ENCODE measurements at regions of chr7 and their contacts with region 1.

Region 1: GRCh38 chr7:111735661-111736551 is 173.6 kb upstream of the IMMP2L start:
- DNase-seq: peak in 8 of 9 experiments; percentile 8 to 70 (median 56)
- ATAC-seq: peak; percentile 54
- H3K4me3 ChIP-seq: no peak overlapping the region
- H3K4me3 Mint-ChIP-seq: no peak overlapping the region
- H3K27ac ChIP-seq: no peak overlapping the region
- H3K27ac Mint-ChIP-seq: no peak overlapping the region
- H3K4me1 ChIP-seq: no peaks in the 10 kb centered on the region
- H3K4me1 Mint-ChIP-seq: no peaks in the 10 kb centered on the region
- H3K27me3 ChIP-seq: no peaks in the 10 kb centered on the region
- H3K27me3 Mint-ChIP-seq: peaks cover 5% of the 10 kb centered on the region
- CTCF ChIP-seq: peak; percentile 93

Region 2: DNA sequence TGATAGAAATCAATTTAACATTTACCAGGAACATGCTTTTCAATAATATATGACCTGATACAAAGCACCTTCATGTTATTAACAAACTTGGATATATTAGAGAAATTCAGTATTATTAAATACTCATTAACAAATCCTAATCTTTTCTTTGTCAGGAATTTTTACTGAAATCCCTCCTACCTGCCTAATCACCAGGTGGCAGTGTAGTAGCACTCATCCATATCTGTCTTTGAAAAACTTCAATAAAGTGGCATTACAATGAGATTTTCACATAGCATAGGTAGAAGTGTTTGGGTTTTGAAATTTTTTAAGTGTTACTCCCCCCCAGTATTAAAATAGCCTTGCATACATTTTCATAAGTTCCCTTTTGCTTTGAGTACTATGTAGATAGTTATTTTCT is 1891.5 kb before region 1 on chr7:
- CTCF ChIA-PET with region 1: interaction called, 4 read pairs
- POLR2A ChIA-PET with region 1: no interaction called
- intact Hi-C with region 1: loop called in 1 of 2 experiments (anchors 1 kb)
- DNase-seq: peak in 2 of 9 experiments; percentile 4 to 40
- ATAC-seq: no peak
- H3K4me3 ChIP-seq: no peak overlapping the region
- H3K4me3 Mint-ChIP-seq: no peak overlapping the region
- H3K27ac ChIP-seq: no peak overlapping the region
- H3K27ac Mint-ChIP-seq: no peak overlapping the region
- H3K4me1 ChIP-seq: no peaks in the 10 kb centered on the region
- H3K4me1 Mint-ChIP-seq: no peaks in the 10 kb centered on the region
- H3K27me3 ChIP-seq: no peaks in the 10 kb centered on the region
- H3K27me3 Mint-ChIP-seq: no peaks in the 10 kb centered on the region
- CTCF ChIP-seq: peak; percentile 22

Region 3: GRCh38 chr7:110090110-110090769 is 1645.7 kb before region 1 on chr7:
- CTCF ChIA-PET with region 1: no interaction called
- POLR2A ChIA-PET with region 1: no interaction called
- intact Hi-C with region 1: loop called (anchors 5 kb)
- DNase-seq: peak in 2 of 9 experiments; percentile 9 to 33
- ATAC-seq: no peak
- H3K4me3 ChIP-seq: no peak overlapping the region
- H3K4me3 Mint-ChIP-seq: no peak overlapping the region
- H3K27ac ChIP-seq: no peak overlapping the region
- H3K27ac Mint-ChIP-seq: no peak overlapping the region
- H3K4me1 ChIP-seq: no peaks in the 10 kb centered on the region
- H3K4me1 Mint-ChIP-seq: no peaks in the 10 kb centered on the region
- H3K27me3 ChIP-seq: no peaks in the 10 kb centered on the region
- H3K27me3 Mint-ChIP-seq: no peaks in the 10 kb centered on the region
- CTCF ChIP-seq: peak; percentile 11

Region 4: GRCh38 chr7:110595690-110596325 is 1140.1 kb before region 1 on chr7:
- CTCF ChIA-PET with region 1: interaction called, 3 read pairs
- POLR2A ChIA-PET with region 1: no interaction called
- intact Hi-C with region 1: loop called in 1 of 2 experiments (anchors 10 kb)
- DNase-seq: peak in 2 of 9 experiments; percentile 13 to 38
- ATAC-seq: no peak
- H3K4me3 ChIP-seq: no peak overlapping the region
- H3K4me3 Mint-ChIP-seq: no peak overlapping the region
- H3K27ac ChIP-seq: no peak overlapping the region
- H3K27ac Mint-ChIP-seq: no peak overlapping the region
- H3K4me1 ChIP-seq: no peaks in the 10 kb centered on the region
- H3K4me1 Mint-ChIP-seq: no peaks in the 10 kb centered on the region
- H3K27me3 ChIP-seq: no peaks in the 10 kb centered on the region
- H3K27me3 Mint-ChIP-seq: no peaks in the 10 kb centered on the region
- CTCF ChIP-seq: no peak

Region 5: GRCh38 chr7:111103678-111104274 is 632.1 kb before region 1 on chr7:
- CTCF ChIA-PET with region 1: no interaction called
- POLR2A ChIA-PET with region 1: no interaction called
- intact Hi-C with region 1: loop called (anchors 5 kb)
- DNase-seq: no peak
- ATAC-seq: no peak
- H3K4me3 ChIP-seq: no peak overlapping the region
- H3K4me3 Mint-ChIP-seq: no peak overlapping the region
- H3K27ac ChIP-seq: no peak overlapping the region
- H3K27ac Mint-ChIP-seq: peak overlapping the region; percentile 63
- H3K4me1 ChIP-seq: peaks cover 39% of the 10 kb centered on the region
- H3K4me1 Mint-ChIP-seq: peaks cover 71% of the 10 kb centered on the region
- H3K27me3 ChIP-seq: no peaks in the 10 kb centered on the region
- H3K27me3 Mint-ChIP-seq: no peaks in the 10 kb centered on the region
- CTCF ChIP-seq: no peak

Region 6: GRCh38 chr7:111633878-111634277 is 102.0 kb before region 1 on chr7:
- CTCF ChIA-PET with region 1: no interaction called
- POLR2A ChIA-PET with region 1: no interaction called
- intact Hi-C with region 1: no loop called
- DNase-seq: no peak
- ATAC-seq: no peak
- H3K4me3 ChIP-seq: no peak overlapping the region
- H3K4me3 Mint-ChIP-seq: no peak overlapping the region
- H3K27ac ChIP-seq: no peak overlapping the region
- H3K27ac Mint-ChIP-seq: no peak overlapping the region
- H3K4me1 ChIP-seq: no peaks in the 10 kb centered on the region
- H3K4me1 Mint-ChIP-seq: no peaks in the 10 kb centered on the region
- H3K27me3 ChIP-seq: no peaks in the 10 kb centered on the region
- H3K27me3 Mint-ChIP-seq: peaks cover 3% of the 10 kb centered on the region
- CTCF ChIP-seq: no peak

Region 7: GRCh38 chr7:111682588-111683340 is 53.1 kb before region 1 on chr7:
- CTCF ChIA-PET with region 1: no interaction called
- POLR2A ChIA-PET with region 1: no interaction called
- intact Hi-C with region 1: no loop called
- DNase-seq: no peak
- ATAC-seq: no peak
- H3K4me3 ChIP-seq: no peak overlapping the region
- H3K4me3 Mint-ChIP-seq: no peak overlapping the region
- H3K27ac ChIP-seq: no peak overlapping the region
- H3K27ac Mint-ChIP-seq: no peak overlapping the region
- H3K4me1 ChIP-seq: no peaks in the 10 kb centered on the region
- H3K4me1 Mint-ChIP-seq: no peaks in the 10 kb centered on the region
- H3K27me3 ChIP-seq: no peaks in the 10 kb centered on the region
- H3K27me3 Mint-ChIP-seq: peaks cover 10% of the 10 kb centered on the region
- CTCF ChIP-seq: no peak

Region 8: GRCh38 chr7:111867348-111867931 is 131.5 kb after region 1 on chr7:
- CTCF ChIA-PET with region 1: no interaction called
- POLR2A ChIA-PET with region 1: no interaction called
- intact Hi-C with region 1: no loop called
- DNase-seq: no peak
- ATAC-seq: no peak
- H3K4me3 ChIP-seq: no peak overlapping the region
- H3K4me3 Mint-ChIP-seq: no peak overlapping the region
- H3K27ac ChIP-seq: no peak overlapping the region
- H3K27ac Mint-ChIP-seq: no peak overlapping the region
- H3K4me1 ChIP-seq: no peaks in the 10 kb centered on the region
- H3K4me1 Mint-ChIP-seq: no peaks in the 10 kb centered on the region
- H3K27me3 ChIP-seq: no peaks in the 10 kb centered on the region
- H3K27me3 Mint-ChIP-seq: no peaks in the 10 kb centered on the region
- CTCF ChIP-seq: no peak